PC-9 (cell line): ENCODE measurements at regions of chr3 and their contacts with region 1.

Region 1: GRCh38 chr3:134427400-134428145 is 53.3 kb upstream of the AMOTL2 start:
- DNase-seq: peak; percentile 93 to 98
- H3K4me3 ChIP-seq: no peak overlapping the region
- H3K27ac ChIP-seq: peak overlapping the region; percentile 60
- H3K4me1 ChIP-seq: peaks cover 31% of the 10 kb centered on the region
- H3K27me3 ChIP-seq: no peaks in the 10 kb centered on the region
- CTCF ChIP-seq: no peak

Region 2: GRCh38 chr3:134326760-134327593 is 100.6 kb before region 1 on chr3:
- CTCF ChIA-PET with region 1: no interaction called
- POLR2A ChIA-PET with region 1: no interaction called
- intact Hi-C with region 1: loop called (anchors 1 kb)
- DNase-seq: peak; percentile 86 to 98
- H3K4me3 ChIP-seq: peak overlapping the region; percentile 23; the same call in 1 of the 2 replicates
- H3K27ac ChIP-seq: peak overlapping the region; percentile 97
- H3K4me1 ChIP-seq: peaks cover 91% of the 10 kb centered on the region
- H3K27me3 ChIP-seq: no peaks in the 10 kb centered on the region
- CTCF ChIP-seq: no peak

Region 3: GRCh38 chr3:134381827-134382442 is 45.6 kb before region 1 on chr3:
- CTCF ChIA-PET with region 1: interaction called, 27 read pairs
- POLR2A ChIA-PET with region 1: interaction called, 5 read pairs
- intact Hi-C with region 1: loop called (anchors 1 kb)
- DNase-seq: peak; percentile 97 to 98
- H3K4me3 ChIP-seq: no peak overlapping the region; the same call in 1 of the 2 replicates
- H3K27ac ChIP-seq: peak overlapping the region; percentile 74
- H3K4me1 ChIP-seq: peaks cover 45% of the 10 kb centered on the region
- H3K27me3 ChIP-seq: no peaks in the 10 kb centered on the region
- CTCF ChIP-seq: no peak

Region 4: GRCh38 chr3:134607054-134608022 is 179.8 kb after region 1 on chr3:
- CTCF ChIA-PET with region 1: no interaction called
- POLR2A ChIA-PET with region 1: no interaction called
- intact Hi-C with region 1: no loop called
- DNase-seq: no peak
- H3K4me3 ChIP-seq: no peak overlapping the region
- H3K27ac ChIP-seq: no peak overlapping the region
- H3K4me1 ChIP-seq: no peaks in the 10 kb centered on the region
- H3K27me3 ChIP-seq: peaks cover 92% of the 10 kb centered on the region
- CTCF ChIP-seq: no peak